H1 (cell line): ENCODE measurements at regions of chr1 and their contacts with region 1.

Region 1: GRCh38 chr1:61569303-61569621 is 155.7 kb downstream of the TM2D1 start:
- DNase-seq: no peak
- H3K4me3 ChIP-seq: no peak overlapping the region
- H3K27ac ChIP-seq: no peak overlapping the region
- H3K4me1 ChIP-seq: no peaks in the 10 kb centered on the region
- H3K27me3 ChIP-seq: no peaks in the 10 kb centered on the region
- CTCF ChIP-seq: no peak
- EP300 ChIP-seq: no peak
- POLR2A ChIP-seq: no peak
- RAD21 ChIP-seq: no peak

Region 2: GRCh38 chr1:61453111-61453961 is 115.9 kb before region 1 on chr1:
- CTCF ChIA-PET with region 1: no interaction called
- POLR2A ChIA-PET with region 1: no interaction called
- DNase-seq: peak; percentile 68 to 76
- H3K4me3 ChIP-seq: no peak overlapping the region
- H3K27ac ChIP-seq: no peak overlapping the region
- H3K4me1 ChIP-seq: peaks cover 0 to 12% (median under 1%) of the 10 kb centered on the region in 4 experiments; a peak in 3 of 7 replicates
- H3K27me3 ChIP-seq: no peaks in the 10 kb centered on the region
- CTCF ChIP-seq: peak; percentile 63 to 82 (median 69)
- EP300 ChIP-seq: no peak
- POLR2A ChIP-seq: no peak
- RAD21 ChIP-seq: peak; percentile 83 to 85

Region 3: DNA sequence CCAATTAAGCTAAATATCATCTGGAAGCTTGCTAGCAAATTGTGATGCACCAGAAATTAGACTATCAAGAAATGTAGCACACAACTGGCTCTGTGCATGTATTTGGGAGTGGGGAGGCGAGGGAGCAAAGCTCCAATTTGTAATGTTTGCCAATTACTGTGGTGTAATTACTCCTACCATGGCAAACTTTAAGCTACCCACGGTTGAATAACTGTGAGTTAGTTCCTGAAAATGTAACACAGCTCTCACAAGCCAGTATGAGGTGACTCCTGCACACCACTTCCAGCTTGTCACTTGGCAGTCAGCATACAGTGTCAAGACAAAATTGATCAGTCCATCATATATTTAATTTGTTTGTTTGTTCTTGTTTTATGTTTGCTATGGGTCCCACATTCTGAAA is 14.4 kb after region 1 on chr1:
- CTCF ChIA-PET with region 1: interaction called, 12 read pairs
- POLR2A ChIA-PET with region 1: no interaction called
- DNase-seq: no peak
- H3K4me3 ChIP-seq: no peak overlapping the region
- H3K27ac ChIP-seq: no peak overlapping the region
- H3K4me1 ChIP-seq: peaks cover 0 to 4% (median 0%) of the 10 kb centered on the region in 4 experiments; a peak in 1 of 7 replicates
- H3K27me3 ChIP-seq: no peaks in the 10 kb centered on the region
- CTCF ChIP-seq: no peak
- EP300 ChIP-seq: no peak
- POLR2A ChIP-seq: no peak
- RAD21 ChIP-seq: no peak